Spleen (tissue), 13 donors: ENCODE measurements at regions of chr9 and their contacts with region 1.

Region 1: GRCh38 chr9:117858561-117858960 is 154.4 kb downstream of the TLR4 start:
- DNase-seq: no peak
- H3K4me3 ChIP-seq: no peak overlapping the region
- H3K27ac ChIP-seq: no peak overlapping the region
- H3K4me1 ChIP-seq: no peaks in the 10 kb centered on the region
- H3K27me3 ChIP-seq: no peaks in the 10 kb centered on the region
- CTCF ChIP-seq: no peak
- POLR2A ChIP-seq: no peak

Region 2: DNA sequence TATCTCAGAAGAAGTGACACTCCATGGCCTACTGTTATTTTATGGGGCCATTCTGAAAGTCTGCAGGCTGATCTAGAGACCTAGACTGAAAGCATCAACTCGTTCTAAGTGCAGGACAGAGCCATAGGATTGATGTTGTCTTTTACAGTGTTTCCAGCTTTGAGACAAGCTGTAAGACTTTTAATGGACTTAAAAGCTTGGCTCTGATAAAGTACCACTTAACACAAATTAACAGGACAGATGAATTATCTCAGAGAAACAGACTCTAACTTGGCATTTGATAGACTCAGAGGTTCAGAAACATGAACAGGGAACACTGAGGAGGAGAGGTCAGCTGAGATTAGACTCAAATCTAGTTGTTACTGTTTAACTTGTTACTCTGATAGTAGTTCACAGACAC is 48.9 kb after region 1 on chr9:
- intact Hi-C with region 1: loop called (anchors 10 kb)
- DNase-seq: no peak
- H3K4me3 ChIP-seq: no peak overlapping the region
- H3K27ac ChIP-seq: no peak overlapping the region
- H3K4me1 ChIP-seq: no peaks in the 10 kb centered on the region
- H3K27me3 ChIP-seq: no peaks in the 10 kb centered on the region
- CTCF ChIP-seq: no peak
- POLR2A ChIP-seq: no peak